ENCODE measurements at regions of chr17 and their contacts with region 1.

Region 1: DNA sequence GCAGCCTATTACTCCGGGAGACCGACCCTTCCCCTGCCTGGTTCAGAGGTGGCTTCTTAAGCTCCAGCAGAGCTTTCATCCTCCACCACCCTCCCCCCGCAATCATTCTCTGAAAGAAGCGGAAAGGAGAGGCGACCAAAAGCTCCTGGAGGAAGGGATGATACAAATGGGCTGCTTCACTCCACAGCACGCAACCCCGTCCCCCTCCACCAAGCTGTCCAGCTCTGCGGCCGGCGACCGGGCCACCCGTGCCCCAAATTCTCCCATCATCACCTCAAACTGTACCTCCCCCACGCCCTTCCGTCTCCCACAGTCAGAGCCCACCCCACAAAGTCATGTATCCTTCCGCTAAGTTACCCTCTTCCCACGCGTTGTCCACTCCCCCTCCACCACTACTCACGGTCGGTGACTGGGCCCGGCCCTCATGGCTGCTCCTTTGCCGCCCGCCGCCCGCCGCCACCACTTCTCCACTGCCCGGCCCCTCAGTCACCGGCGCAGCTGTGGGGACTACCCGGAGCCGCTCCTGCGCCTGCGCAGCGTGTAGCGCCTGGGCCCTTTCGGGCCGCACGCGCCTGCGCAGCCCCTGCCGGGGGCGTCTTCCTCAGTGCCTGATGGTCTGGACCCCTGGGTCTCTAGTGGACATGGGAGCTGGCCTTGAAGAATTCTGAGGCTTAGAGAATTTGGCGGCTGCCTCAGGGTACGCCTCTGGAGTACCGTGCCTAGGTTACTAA is at the start of gene FAM222B:
- DNase-seq: peak; percentile 69 to 86
- H3K4me3 ChIP-seq: peak within 1 kb of the TSS; percentile 84
- H3K27ac ChIP-seq: peak within 1 kb of the TSS; percentile 84
- H3K4me1 ChIP-seq: peaks cover 0 to 18% (median 10%) of the 10 kb centered on the region in 4 donors
- H3K27me3 ChIP-seq: no peaks in the 10 kb centered on the region
- CTCF ChIP-seq: no peak

Region 2: DNA sequence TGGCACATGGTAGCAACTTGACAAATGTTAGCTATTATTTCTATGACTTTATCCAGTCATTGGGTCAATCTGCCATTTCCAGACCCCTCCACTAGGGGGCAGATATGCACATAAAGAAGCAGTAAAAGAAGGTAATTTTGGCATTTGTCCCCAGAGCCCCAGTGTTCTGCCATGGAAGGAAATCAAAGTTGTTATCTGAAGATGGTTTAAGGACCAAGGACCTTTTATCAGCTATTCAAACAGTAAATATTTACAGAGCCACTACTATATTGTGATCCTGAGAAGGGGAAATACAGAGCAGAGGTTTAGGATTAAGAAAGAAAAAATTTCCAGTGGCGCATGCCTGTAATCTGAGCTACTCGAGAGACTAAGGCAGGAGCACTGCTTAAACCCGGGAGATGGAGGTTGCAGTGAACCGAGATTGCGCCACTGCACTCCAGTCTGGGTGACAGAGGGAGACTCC is 78.6 kb before region 1 on chr17:
- intact Hi-C with region 1: loop called (anchors 10 kb)
- DNase-seq: peak; percentile 81 to 93
- H3K4me3 ChIP-seq: no peak overlapping the region
- H3K27ac ChIP-seq: no peak overlapping the region
- H3K4me1 ChIP-seq: peaks cover 0 to 11% (median 0%) of the 10 kb centered on the region in 4 donors
- H3K27me3 ChIP-seq: no peaks in the 10 kb centered on the region
- CTCF ChIP-seq: peak; percentile 89 to 92

Region 3: DNA sequence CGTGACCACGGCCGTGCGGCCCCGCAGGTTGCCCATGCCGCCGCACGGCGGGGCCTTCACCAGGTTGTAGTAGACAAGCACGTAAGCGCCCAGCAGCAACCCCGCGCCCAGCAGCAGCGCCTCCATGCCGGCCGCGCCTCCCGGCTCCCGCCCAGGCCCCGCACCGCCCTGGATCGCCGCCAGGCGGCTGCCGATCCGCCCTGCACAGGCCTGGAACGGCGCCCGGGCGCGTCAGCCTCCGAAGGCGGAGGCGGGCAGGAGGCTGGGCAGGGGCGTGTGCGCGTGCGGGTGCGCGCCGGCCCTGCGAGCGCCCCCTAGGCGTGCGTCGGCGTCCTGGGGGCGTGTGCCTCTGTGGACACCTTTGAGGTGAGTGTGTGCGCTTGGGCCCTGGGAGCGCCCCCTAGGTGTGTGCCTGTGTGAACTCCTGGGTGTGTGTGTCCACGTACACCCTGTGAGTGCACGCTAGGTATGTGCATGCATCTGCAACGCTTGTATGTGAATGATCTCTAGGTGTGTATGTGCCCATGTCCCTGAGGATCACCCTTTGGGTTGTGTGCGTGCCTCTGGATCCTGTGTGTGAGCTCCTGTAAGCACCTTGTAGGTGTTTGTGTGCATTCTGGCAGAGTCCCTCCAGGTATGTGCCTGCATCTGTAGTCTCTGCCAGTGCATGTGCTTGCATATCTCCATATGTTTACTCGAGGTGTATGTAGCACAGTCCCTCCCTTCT is 60.5 kb after region 1 on chr17 and contains the start of gene DHRS13:
- intact Hi-C with region 1: loop called (anchors 10 kb)
- DNase-seq: peak; percentile 74 to 90
- H3K4me3 ChIP-seq: peak within 1 kb of the TSS; percentile 62 to 67
- H3K27ac ChIP-seq: peak within 1 kb of the TSS; percentile 77 to 81
- H3K4me1 ChIP-seq: peaks cover 0 to 38% (median 16%) of the 10 kb centered on the region in 4 donors
- H3K27me3 ChIP-seq: no peaks in the 10 kb centered on the region
- CTCF ChIP-seq: peak; percentile 75 to 84